CD4-positive, alpha-beta memory T cell (primary cell): ENCODE measurements at regions of chr14 and their contacts with region 1.

Region 1: DNA sequence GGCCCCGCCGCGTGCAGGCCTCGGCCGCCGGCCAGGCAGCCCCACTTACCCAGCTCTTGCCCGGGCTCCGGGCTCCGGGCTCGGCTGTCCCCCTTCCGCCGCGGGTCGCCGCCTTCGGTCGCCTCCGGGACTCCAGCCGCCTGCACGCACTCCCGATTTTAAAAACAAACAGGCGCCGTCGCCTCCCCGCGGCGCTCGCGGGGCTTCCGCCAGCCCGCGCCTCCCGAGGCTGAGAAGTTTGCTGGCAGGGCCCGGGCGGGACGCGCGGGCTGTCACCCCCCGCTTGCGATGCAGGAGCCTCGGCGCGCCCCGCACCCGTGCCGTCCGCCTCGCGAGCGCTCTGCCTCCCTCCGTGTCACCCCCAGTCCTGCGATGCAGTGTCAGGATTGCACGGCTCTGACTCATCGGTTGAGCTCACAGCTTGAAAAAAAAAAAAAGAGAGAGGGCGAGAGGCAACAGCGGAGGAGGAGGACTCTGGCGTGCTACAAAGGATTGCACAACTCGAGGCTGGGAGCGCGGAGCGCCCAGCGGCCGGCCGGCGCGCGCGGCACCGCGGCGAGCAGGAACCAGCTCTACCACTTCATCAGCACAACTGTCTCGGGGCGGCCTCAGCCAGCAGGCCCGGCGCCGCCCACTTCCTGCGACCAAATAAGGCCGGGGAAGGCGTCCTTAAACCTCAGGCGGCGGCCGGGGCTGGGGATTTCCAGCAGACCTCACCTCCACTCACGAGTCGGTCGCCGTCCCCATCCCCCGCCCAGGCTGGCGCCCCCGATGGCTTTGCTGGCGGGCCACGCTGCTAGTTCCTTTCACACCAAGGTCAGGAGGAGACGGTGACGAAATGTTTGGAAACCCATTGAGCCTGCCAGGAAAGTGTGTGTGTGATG is 45.8 kb upstream of the PNMA1 start:
- DNase-seq: peak; percentile 95 to 98 (median 96)
- H3K4me3 ChIP-seq: peak overlapping the region; percentile 2 to 73
- H3K4me3 Mint-ChIP-seq: peak overlapping the region; percentile 88 to 97 (median 92)
- H3K27ac ChIP-seq: peak overlapping the region; percentile 98
- H3K27ac Mint-ChIP-seq: peak overlapping the region; percentile 96 to 100 (median 99)
- H3K4me1 ChIP-seq: peaks cover 73% of the 10 kb centered on the region
- H3K4me1 Mint-ChIP-seq: peaks cover 66 to 90% (median 75%) of the 10 kb centered on the region in 4 donors
- H3K27me3 ChIP-seq: no peaks in the 10 kb centered on the region
- H3K27me3 Mint-ChIP-seq: no peaks in the 10 kb centered on the region

Region 2: GRCh38 chr14:73526569-73526968 is 233.4 kb before region 1 on chr14:
- CTCF ChIA-PET with region 1: no interaction called
- POLR2A ChIA-PET with region 1: no interaction called
- intact Hi-C with region 1: no loop called
- DNase-seq: no peak
- H3K4me3 ChIP-seq: no peak overlapping the region
- H3K4me3 Mint-ChIP-seq: no peak overlapping the region
- H3K27ac ChIP-seq: no peak overlapping the region
- H3K27ac Mint-ChIP-seq: peak overlapping the region in 1 of 7 donors; percentile 64
- H3K4me1 ChIP-seq: no peaks in the 10 kb centered on the region
- H3K4me1 Mint-ChIP-seq: no peaks in the 10 kb centered on the region
- H3K27me3 ChIP-seq: no peaks in the 10 kb centered on the region
- H3K27me3 Mint-ChIP-seq: no peaks in the 10 kb centered on the region

Region 3: DNA sequence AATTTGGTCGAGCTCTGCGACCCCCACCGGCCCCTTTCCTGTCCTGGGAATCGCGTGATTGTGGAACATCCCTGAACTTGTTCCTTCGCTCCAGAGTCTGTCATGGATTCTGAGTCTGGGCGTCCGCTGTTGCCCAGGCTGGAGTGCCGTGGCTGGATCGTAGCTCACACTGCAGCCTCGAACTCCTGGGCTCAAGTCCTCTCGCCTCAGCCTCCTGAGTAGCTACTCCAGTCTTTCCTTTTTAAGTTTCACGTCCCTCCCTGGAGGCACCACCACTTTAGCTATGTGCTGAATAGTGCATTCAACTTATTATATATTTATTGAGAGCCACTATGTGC is 146.9 kb before region 1 on chr14:
- CTCF ChIA-PET with region 1: no interaction called
- POLR2A ChIA-PET with region 1: interaction called, 11 read pairs
- intact Hi-C with region 1: no loop called
- DNase-seq: no peak
- H3K4me3 ChIP-seq: peak overlapping the region; percentile 28 to 82
- H3K4me3 Mint-ChIP-seq: peak overlapping the region; percentile 85 to 90 (median 87)
- H3K27ac ChIP-seq: peak overlapping the region; percentile 40
- H3K27ac Mint-ChIP-seq: peak overlapping the region; percentile 46 to 91 (median 75)
- H3K4me1 ChIP-seq: peaks cover 3% of the 10 kb centered on the region
- H3K4me1 Mint-ChIP-seq: peaks cover 0 to 6% (median 3%) of the 10 kb centered on the region in 4 donors
- H3K27me3 ChIP-seq: no peaks in the 10 kb centered on the region
- H3K27me3 Mint-ChIP-seq: no peaks in the 10 kb centered on the region

Region 4: DNA sequence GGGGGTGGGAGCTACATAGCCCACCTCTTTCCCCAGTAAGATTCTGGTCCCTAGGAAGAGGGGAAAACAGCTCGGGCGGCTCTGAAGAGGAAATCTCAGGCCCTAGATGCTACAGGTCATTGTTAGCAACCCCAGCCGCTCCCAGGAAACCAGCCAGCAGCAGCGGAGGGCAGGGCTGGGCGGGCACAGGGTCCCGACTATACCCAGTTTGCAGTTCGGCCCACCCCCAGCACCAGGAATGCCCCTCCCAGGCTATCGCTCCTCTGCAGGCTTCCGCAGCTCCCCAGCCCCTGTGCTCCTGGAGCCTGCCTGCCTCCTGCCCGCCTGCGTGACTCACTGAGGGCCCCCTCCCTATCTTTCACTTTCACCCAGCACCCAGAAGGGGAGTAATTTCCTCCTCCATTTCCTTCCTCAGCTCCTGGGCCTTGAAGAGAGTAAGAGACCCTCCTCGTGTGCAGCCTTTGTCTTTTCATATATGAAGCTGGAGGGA is 18.5 kb before region 1 on chr14:
- CTCF ChIA-PET with region 1: interaction called, 100 read pairs
- POLR2A ChIA-PET with region 1: interaction called, 421 read pairs
- intact Hi-C with region 1: no loop called
- DNase-seq: peak; percentile 56 to 87 (median 62)
- H3K4me3 ChIP-seq: peak overlapping the region; percentile 36 to 49
- H3K4me3 Mint-ChIP-seq: peak overlapping the region; percentile 79 to 90 (median 86)
- H3K27ac ChIP-seq: peak overlapping the region; percentile 66
- H3K27ac Mint-ChIP-seq: peak overlapping the region; percentile 93 to 98 (median 95)
- H3K4me1 ChIP-seq: peaks cover 77% of the 10 kb centered on the region
- H3K4me1 Mint-ChIP-seq: peaks cover 50 to 73% (median 61%) of the 10 kb centered on the region in 4 donors
- H3K27me3 ChIP-seq: no peaks in the 10 kb centered on the region
- H3K27me3 Mint-ChIP-seq: no peaks in the 10 kb centered on the region

Region 5: GRCh38 chr14:73785873-73786695 is 26.1 kb after region 1 on chr14:
- CTCF ChIA-PET with region 1: interaction called, 75 read pairs
- POLR2A ChIA-PET with region 1: interaction called, 465 read pairs
- intact Hi-C with region 1: loop called (anchors 1 kb)
- DNase-seq: peak; percentile 62 to 84 (median 64)
- H3K4me3 ChIP-seq: peak overlapping the region; percentile 89 to 90
- H3K4me3 Mint-ChIP-seq: peak overlapping the region; percentile 94 to 98 (median 96)
- H3K27ac ChIP-seq: peak overlapping the region; percentile 84
- H3K27ac Mint-ChIP-seq: peak overlapping the region; percentile 95 to 99 (median 97)
- H3K4me1 ChIP-seq: peaks cover 62% of the 10 kb centered on the region
- H3K4me1 Mint-ChIP-seq: peaks cover 53 to 72% (median 61%) of the 10 kb centered on the region in 4 donors
- H3K27me3 ChIP-seq: no peaks in the 10 kb centered on the region
- H3K27me3 Mint-ChIP-seq: no peaks in the 10 kb centered on the region

Region 6: GRCh38 chr14:73851644-73852382 is 91.9 kb after region 1 on chr14 and contains the start of gene PTGR2:
- CTCF ChIA-PET with region 1: interaction called, 3 read pairs
- POLR2A ChIA-PET with region 1: interaction called, 30 read pairs
- intact Hi-C with region 1: no loop called
- DNase-seq: peak; percentile 88 to 93 (median 91)
- H3K4me3 ChIP-seq: peak within 1 kb of the TSS; percentile 42 to 91
- H3K4me3 Mint-ChIP-seq: peak within 1 kb of the TSS; percentile 92 to 99 (median 94)
- H3K27ac ChIP-seq: peak within 1 kb of the TSS; percentile 66
- H3K27ac Mint-ChIP-seq: peak within 1 kb of the TSS; percentile 93 to 99 (median 98)
- H3K4me1 ChIP-seq: peaks cover 17% of the 10 kb centered on the region
- H3K4me1 Mint-ChIP-seq: peaks cover 9 to 24% (median 17%) of the 10 kb centered on the region in 4 donors
- H3K27me3 ChIP-seq: no peaks in the 10 kb centered on the region
- H3K27me3 Mint-ChIP-seq: no peaks in the 10 kb centered on the region
- total RNA-seq, gene PTGR2: 4.5 to 5.0 TPM

Region 7: GRCh38 chr14:73949744-73950734 is 190.1 kb after region 1 on chr14 and contains the starts of genes COQ6 and FAM161B:
- CTCF ChIA-PET with region 1: no interaction called
- POLR2A ChIA-PET with region 1: interaction called, 5 read pairs
- intact Hi-C with region 1: loop called (anchors 5 kb)
- DNase-seq: peak; percentile 94 to 97 (median 95)
- H3K4me3 ChIP-seq: peak within 1 kb of the TSS; percentile 93 to 99
- H3K4me3 Mint-ChIP-seq: peak within 1 kb of the TSS; percentile 93 to 100 (median 98)
- H3K27ac ChIP-seq: peak within 1 kb of the TSS; percentile 84
- H3K27ac Mint-ChIP-seq: peak within 1 kb of the TSS; percentile 94 to 99 (median 97)
- H3K4me1 ChIP-seq: peaks cover 11% of the 10 kb centered on the region
- H3K4me1 Mint-ChIP-seq: peaks cover 13 to 25% (median 22%) of the 10 kb centered on the region in 4 donors
- H3K27me3 ChIP-seq: no peaks in the 10 kb centered on the region
- H3K27me3 Mint-ChIP-seq: no peaks in the 10 kb centered on the region
- total RNA-seq, gene COQ6: 38.7 to 41.1 TPM
- total RNA-seq, gene FAM161B: 5.8 to 6.5 TPM